ENCODE measurements at regions of chr15 and their contacts with region 1.

Region 1: GRCh38 chr15:89430530-89431341 is 65.6 kb downstream of the RHCG start:
- DNase-seq: peak; percentile 92
- H3K4me3 Mint-ChIP-seq: peak overlapping the region; percentile 69
- H3K27ac Mint-ChIP-seq: no peak overlapping the region
- H3K4me1 Mint-ChIP-seq: peaks cover 6% of the 10 kb centered on the region
- H3K27me3 Mint-ChIP-seq: peaks cover 19% of the 10 kb centered on the region

Region 2: GRCh38 chr15:89416141-89416853 is 14.4 kb before region 1 on chr15:
- CTCF ChIA-PET with region 1: interaction called, 51 read pairs
- POLR2A ChIA-PET with region 1: no interaction called
- intact Hi-C with region 1: loop called (anchors 2 kb)
- DNase-seq: peak; percentile 90
- H3K4me3 Mint-ChIP-seq: no peak overlapping the region
- H3K27ac Mint-ChIP-seq: no peak overlapping the region
- H3K4me1 Mint-ChIP-seq: peaks cover 10% of the 10 kb centered on the region
- H3K27me3 Mint-ChIP-seq: peaks cover 88% of the 10 kb centered on the region

Region 3: GRCh38 chr15:91302588-91303439 is 1872.1 kb after region 1 on chr15:
- CTCF ChIA-PET with region 1: no interaction called
- POLR2A ChIA-PET with region 1: no interaction called
- intact Hi-C with region 1: no loop called
- DNase-seq: peak; percentile 28
- H3K4me3 Mint-ChIP-seq: no peak overlapping the region
- H3K27ac Mint-ChIP-seq: no peak overlapping the region
- H3K4me1 Mint-ChIP-seq: peaks cover 21% of the 10 kb centered on the region
- H3K27me3 Mint-ChIP-seq: peaks cover 10% of the 10 kb centered on the region